ENCODE measurements at regions of chr19 and their contacts with region 1.

Region 1: DNA sequence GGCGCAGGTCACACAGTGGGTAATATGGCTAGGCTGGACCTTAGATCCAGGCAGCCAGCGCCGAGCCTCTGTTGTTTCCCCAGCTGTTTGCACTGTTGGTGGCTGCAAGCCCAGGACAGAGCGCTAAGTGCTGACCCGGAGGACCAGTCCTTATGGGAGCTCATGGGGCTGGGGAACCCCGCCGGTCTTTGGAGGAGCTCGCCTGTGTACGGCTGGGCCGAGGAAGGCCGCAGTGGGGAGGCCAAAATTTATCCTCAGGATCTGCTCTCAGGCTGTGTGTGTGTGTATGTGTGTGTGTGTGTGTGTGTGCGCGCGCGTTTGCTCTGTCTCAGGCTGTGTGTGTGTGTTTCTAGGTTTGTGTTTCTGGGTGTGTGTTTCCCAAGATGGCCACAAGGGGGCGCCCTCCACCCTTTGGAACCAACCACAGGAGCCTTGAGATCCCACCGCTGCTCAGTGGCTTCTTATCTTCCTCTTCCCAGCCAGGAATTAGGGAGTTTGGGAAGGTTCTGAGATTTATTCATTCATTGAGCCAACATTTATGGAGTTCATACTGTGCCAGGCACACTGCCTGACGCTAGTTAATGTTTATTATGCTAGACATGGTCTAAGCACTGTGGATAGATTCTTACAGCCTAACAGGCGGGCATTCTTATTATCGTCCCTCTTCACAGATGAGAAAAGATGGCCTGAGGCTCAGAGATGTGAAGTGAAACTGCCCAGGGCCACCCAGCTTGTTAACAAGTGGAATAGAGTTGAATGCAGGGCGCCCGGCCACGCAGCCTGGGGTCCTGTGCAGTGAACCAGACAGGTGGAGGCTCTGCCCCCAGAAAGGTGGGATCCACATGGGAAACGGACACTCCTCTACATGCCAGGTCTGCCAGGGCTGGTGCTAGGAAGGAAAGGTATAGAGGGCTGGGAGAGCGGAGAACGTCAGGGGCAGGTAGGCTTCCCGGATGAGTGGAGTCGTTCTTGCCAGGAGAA is 13.0 kb downstream of the PGLYRP1 start:
- DNase-seq: peak; percentile 80 to 87
- H3K4me3 ChIP-seq: no peak overlapping the region
- H3K27ac ChIP-seq: no peak overlapping the region
- H3K4me1 ChIP-seq: peaks cover 6 to 11% (median 7%) of the 10 kb centered on the region in 4 donors
- H3K27me3 ChIP-seq: peaks cover 0 to 23% (median 6%) of the 10 kb centered on the region in 3 donors
- CTCF ChIP-seq: peak in 5 of 7 experiments; percentile 53 to 96 (median 91)
- EP300 ChIP-seq: no peak
- POLR2A ChIP-seq: no peak

Region 2: DNA sequence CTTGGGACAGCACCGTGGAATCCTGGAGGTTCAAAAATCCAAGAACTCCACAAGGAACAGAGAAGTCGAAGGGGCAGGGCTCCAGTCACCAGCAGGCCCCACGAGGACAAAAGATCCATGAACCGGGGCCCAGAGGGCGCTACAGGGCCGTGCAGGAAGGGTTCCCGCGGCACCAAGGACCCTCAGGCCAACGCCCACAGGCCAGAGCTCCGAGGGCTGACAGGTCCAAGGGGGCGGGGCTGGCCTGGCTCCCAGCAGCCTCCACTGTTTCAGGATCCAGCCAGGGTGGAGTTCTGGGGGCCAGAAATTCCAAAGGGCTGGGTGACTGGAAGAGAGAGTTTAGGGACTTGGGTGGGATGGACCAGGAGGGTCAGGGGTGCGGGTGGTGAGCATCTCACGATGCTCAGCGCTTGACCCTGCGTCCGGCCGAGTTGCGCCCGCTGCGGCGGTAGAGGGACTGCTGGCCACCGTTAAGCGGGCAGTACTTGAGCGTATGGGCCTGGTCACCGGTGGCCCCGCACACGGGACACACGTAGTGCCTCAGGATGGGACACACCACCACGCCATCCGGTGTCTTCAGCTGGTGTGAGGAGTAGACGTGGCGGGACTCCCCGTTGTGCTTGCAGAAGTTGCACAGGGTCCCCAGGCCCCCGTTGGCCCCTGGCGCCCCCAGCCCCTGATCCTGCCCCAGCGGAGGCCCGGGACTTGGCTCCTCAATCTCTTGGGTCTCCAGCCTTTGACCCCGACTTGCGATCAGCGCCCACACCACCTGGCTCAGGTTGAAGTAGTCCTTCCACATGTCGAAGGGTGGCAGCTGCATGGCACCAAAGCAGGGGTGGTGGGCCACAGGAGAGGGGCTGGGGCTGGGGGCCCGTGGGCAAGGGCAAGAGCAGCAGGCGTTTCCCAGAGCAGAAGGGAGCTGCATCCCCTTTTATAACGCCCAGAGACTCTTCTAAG is 95.7 kb before region 1 on chr19 and contains the start of gene NANOS2:
- intact Hi-C with region 1: loop called (anchors 10 kb)
- DNase-seq: peak in 1 of 2 donors; percentile 34
- H3K4me3 ChIP-seq: no peak within 1 kb of the TSS
- H3K27ac ChIP-seq: no peak within 1 kb of the TSS
- H3K4me1 ChIP-seq: no peaks in the 10 kb centered on the region
- H3K27me3 ChIP-seq: peaks cover 0 to 70% (median 5%) of the 10 kb centered on the region in 3 donors
- CTCF ChIP-seq: no peak
- EP300 ChIP-seq: no peak
- POLR2A ChIP-seq: no peak
- total RNA-seq, gene NANOS2: not detected

Measured in stomach (tissue), 19 donors.